Activated CD4-positive, alpha-beta T cell treated with anti-CD3 and anti-CD28 coated beads, Interleukin-2, amount 10 ng/mL, durations not matched to agents 7 days and 5 days (primary cell): ENCODE measurements at regions of chr22 and their contacts with region 1.

Region 1: DNA sequence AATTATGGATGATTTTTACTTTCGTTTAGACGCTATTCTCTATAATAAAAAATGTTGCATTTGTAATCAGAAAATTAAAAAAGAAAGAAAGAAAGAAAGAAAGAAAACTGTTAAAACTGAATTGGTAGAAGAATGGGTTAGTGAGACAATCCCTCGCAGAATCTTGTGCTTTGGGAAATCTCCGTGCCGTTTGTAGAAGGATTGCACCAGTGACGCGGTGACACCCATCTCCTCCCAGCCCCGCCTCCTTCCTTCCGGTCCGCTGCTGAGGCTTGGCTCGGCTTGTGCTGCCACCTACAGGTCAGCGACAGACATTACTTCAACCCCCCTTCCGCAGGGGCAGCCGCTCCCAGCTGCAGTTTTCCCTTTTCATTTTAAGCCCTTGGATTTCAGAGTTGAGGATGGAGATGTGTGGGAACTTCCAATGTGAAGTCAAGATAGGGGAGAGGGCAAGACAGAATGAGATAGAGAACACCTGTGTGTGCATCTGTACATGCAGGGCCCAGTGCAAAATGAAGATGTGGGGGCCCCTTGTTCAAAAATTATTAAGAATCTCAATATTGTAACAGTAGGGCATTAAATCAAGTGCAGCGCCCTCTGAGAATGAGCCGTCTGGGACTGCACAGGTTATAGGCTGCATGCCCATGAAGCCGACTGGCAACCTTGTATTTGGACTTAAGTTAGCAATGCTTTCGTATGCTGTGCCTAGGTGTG is 41.1 kb downstream of the TST start:
- DNase-seq: peak; percentile 93
- H3K4me3 Mint-ChIP-seq: peak overlapping the region; percentile 69
- H3K27ac Mint-ChIP-seq: peak overlapping the region; percentile 85
- H3K4me1 Mint-ChIP-seq: peaks cover 9% of the 10 kb centered on the region
- H3K27me3 Mint-ChIP-seq: peaks cover 7% of the 10 kb centered on the region

Region 2: GRCh38 chr22:36757668-36758211 is 220.4 kb before region 1 on chr22:
- CTCF ChIA-PET with region 1: interaction called, 10 read pairs
- POLR2A ChIA-PET with region 1: no interaction called
- DNase-seq: peak; percentile 83
- H3K4me3 Mint-ChIP-seq: no peak overlapping the region
- H3K27ac Mint-ChIP-seq: no peak overlapping the region
- H3K4me1 Mint-ChIP-seq: peaks cover 1% of the 10 kb centered on the region
- H3K27me3 Mint-ChIP-seq: peaks cover 6% of the 10 kb centered on the region

Region 3: GRCh38 chr22:36775964-36776669 is 202.0 kb before region 1 on chr22 and contains the start of gene IFT27:
- CTCF ChIA-PET with region 1: interaction called, 14 read pairs
- POLR2A ChIA-PET with region 1: interaction called, 6 read pairs
- DNase-seq: peak; percentile 99
- H3K4me3 Mint-ChIP-seq: peak within 1 kb of the TSS; percentile 88
- H3K27ac Mint-ChIP-seq: peak within 1 kb of the TSS; percentile 95
- H3K4me1 Mint-ChIP-seq: peaks cover 26% of the 10 kb centered on the region
- H3K27me3 Mint-ChIP-seq: no peaks in the 10 kb centered on the region
- total RNA-seq, gene IFT27: 20.7 to 29.0 TPM

Region 4: GRCh38 chr22:36781656-36782627 is 196.2 kb before region 1 on chr22:
- CTCF ChIA-PET with region 1: interaction called, 18 read pairs
- POLR2A ChIA-PET with region 1: no interaction called
- DNase-seq: peak; percentile 87
- H3K4me3 Mint-ChIP-seq: no peak overlapping the region
- H3K27ac Mint-ChIP-seq: peak overlapping the region; percentile 28
- H3K4me1 Mint-ChIP-seq: peaks cover 17% of the 10 kb centered on the region
- H3K27me3 Mint-ChIP-seq: peaks cover 2% of the 10 kb centered on the region

Region 5: GRCh38 chr22:36787204-36787988 is 190.7 kb before region 1 on chr22:
- CTCF ChIA-PET with region 1: interaction called, 18 read pairs
- POLR2A ChIA-PET with region 1: no interaction called
- DNase-seq: no peak
- H3K4me3 Mint-ChIP-seq: no peak overlapping the region
- H3K27ac Mint-ChIP-seq: no peak overlapping the region
- H3K4me1 Mint-ChIP-seq: peaks cover 17% of the 10 kb centered on the region
- H3K27me3 Mint-ChIP-seq: peaks cover 2% of the 10 kb centered on the region

Region 6: DNA sequence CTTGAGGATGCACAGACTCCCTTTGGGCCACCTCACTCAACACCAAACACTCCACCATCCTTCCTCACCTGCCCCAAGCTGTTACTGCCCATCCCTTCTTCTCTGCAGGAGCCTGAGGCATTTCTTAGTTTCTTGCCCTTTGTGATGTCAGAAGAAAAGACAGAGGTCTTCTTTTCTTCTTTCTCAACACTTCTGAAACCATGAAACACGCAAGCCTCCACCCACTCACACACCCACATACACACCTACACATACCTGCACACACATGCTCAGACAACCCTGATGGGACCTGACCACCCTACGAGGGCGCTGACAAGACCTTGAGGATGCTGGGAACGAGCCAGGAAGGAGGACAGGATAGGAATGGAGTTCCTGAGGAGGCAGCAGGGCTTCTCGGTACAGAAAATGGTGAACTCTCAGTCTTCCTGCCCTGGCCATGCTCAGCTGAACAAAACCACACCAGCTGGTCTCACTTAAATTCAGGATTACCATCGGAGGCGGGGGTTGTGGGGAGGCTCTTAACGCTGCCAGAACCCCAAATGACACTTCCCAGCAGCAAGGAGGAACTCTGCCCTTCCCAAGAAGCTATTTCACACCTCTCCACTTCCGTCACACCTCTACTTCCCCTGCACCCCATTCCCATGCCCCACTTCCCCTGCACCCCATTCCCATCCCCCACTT is 23.8 kb before region 1 on chr22:
- CTCF ChIA-PET with region 1: interaction called, 10 read pairs
- POLR2A ChIA-PET with region 1: no interaction called
- DNase-seq: no peak
- H3K4me3 Mint-ChIP-seq: no peak overlapping the region
- H3K27ac Mint-ChIP-seq: no peak overlapping the region
- H3K4me1 Mint-ChIP-seq: peaks cover 3% of the 10 kb centered on the region
- H3K27me3 Mint-ChIP-seq: peaks cover 5% of the 10 kb centered on the region

Region 7: DNA sequence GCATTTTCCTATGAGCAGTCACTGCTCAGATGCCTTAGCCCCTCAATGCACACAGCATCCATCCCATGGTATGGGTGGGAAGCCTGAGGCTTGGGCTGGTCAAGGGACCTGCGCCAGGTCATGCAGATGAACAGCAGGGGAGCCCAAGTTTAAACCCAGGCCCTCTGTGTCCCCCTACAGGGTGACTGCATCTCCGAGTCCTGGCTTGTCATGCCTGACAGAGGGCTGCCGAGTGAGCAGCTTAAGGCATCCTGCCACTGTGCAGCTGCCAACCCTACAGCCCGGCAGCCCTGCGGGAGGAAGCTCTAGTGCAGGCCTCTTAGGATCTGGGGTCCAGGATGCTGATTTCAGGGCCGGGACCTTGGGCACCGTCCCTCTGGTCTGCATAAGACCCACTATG is 161.7 kb after region 1 on chr22:
- CTCF ChIA-PET with region 1: no interaction called
- POLR2A ChIA-PET with region 1: no interaction called
- DNase-seq: no peak
- H3K4me3 Mint-ChIP-seq: no peak overlapping the region
- H3K27ac Mint-ChIP-seq: no peak overlapping the region
- H3K4me1 Mint-ChIP-seq: peaks cover 37% of the 10 kb centered on the region
- H3K27me3 Mint-ChIP-seq: no peaks in the 10 kb centered on the region

Region 8: GRCh38 chr22:37199103-37199759 is 221.1 kb after region 1 on chr22:
- CTCF ChIA-PET with region 1: no interaction called
- POLR2A ChIA-PET with region 1: no interaction called
- DNase-seq: peak; percentile 100
- H3K4me3 Mint-ChIP-seq: peak overlapping the region; percentile 94
- H3K27ac Mint-ChIP-seq: peak overlapping the region; percentile 95
- H3K4me1 Mint-ChIP-seq: peaks cover 42% of the 10 kb centered on the region
- H3K27me3 Mint-ChIP-seq: no peaks in the 10 kb centered on the region